Transverse colon (tissue), 4 donors: ENCODE measurements at regions of chr6 and their contacts with region 1.

Region 1: GRCh38 chr6:73520688-73521350 is at the start of gene EEF1A1:
- DNase-seq: peak; percentile 100
- H3K4me3 ChIP-seq: peak within 1 kb of the TSS; percentile 78 to 95 (median 79)
- H3K27ac ChIP-seq: peak within 1 kb of the TSS; percentile 97 to 100 (median 99)
- H3K4me1 ChIP-seq: peaks cover 17 to 56% (median 35%) of the 10 kb centered on the region in 4 donors
- H3K27me3 ChIP-seq: no peaks in the 10 kb centered on the region
- CTCF ChIP-seq: no peak
- EP300 ChIP-seq: peak; percentile 83
- POLR2A ChIP-seq: peak; percentile 100
- total RNA-seq, gene EEF1A1: 2,654 to 8,743 (median 5,443) TPM

Region 2: DNA sequence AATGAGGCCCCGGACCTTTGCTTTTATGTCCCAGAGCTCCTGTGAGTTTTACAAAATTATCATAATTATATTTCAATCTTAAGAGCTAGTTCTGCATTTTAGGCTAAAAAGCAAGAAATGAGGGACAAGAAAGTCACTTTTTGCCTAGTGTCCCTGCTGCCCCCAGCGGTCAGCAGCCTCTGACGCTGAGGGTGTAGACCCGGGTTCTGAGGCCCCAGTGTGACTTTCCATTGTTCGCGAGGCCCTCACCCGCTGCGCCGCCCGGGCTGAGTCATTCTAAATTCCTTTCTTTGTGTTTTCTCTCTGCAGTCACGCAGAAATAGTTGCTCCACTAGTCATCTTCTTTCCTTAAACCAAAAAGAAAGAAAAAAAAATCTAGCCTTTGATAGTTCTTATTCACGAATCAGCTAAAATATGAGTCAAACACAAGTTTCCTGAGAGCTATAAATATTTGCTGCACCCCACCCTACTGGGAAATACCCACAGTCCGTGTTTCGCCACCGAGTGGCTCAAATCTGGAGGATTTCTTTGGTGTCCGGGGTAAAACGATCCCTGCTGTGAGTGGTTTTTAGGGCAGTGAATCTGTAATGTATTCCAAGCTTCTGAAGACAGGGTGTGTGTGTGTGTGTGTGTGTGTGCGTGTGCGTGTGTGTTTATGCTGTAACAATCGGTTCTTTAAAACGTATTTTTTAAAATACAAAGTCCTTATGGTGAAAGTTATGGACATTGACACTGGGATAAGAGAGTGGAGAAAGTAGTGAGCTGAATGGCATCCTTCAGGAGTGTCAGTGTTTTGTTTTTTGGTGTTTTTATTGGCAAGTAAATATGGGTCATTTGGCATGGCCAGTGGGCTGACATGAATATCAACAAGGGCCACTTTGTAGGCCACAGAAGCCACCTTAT is 59.7 kb after region 1 on chr6:
- in situ Hi-C with region 1: loop called in 1 of 4 experiments (anchors 10 kb)
- intact Hi-C with region 1: loop called (anchors 10 kb)
- DNase-seq: peak; percentile 76
- H3K4me3 ChIP-seq: peak overlapping the region in 3 of 4 donors; percentile 10 to 22 (median 13)
- H3K27ac ChIP-seq: peak overlapping the region; percentile 81 to 92 (median 88)
- H3K4me1 ChIP-seq: peaks cover 15 to 30% (median 23%) of the 10 kb centered on the region in 4 donors
- H3K27me3 ChIP-seq: no peaks in the 10 kb centered on the region
- CTCF ChIP-seq: peak in 4 of 5 experiments; percentile 20 to 36 (median 30)
- EP300 ChIP-seq: peak; percentile 64
- POLR2A ChIP-seq: peak; percentile 30

Region 3: GRCh38 chr6:73604020-73604419 is 83.2 kb after region 1 on chr6:
- in situ Hi-C with region 1: loop called in 3 of 4 experiments (anchors 10 to 25 kb)
- intact Hi-C with region 1: no loop called
- DNase-seq: no peak
- H3K4me3 ChIP-seq: no peak overlapping the region
- H3K27ac ChIP-seq: no peak overlapping the region
- H3K4me1 ChIP-seq: peaks cover 0 to 5% (median 0%) of the 10 kb centered on the region in 4 donors
- H3K27me3 ChIP-seq: no peaks in the 10 kb centered on the region
- CTCF ChIP-seq: no peak
- EP300 ChIP-seq: no peak
- POLR2A ChIP-seq: no peak

Region 4: DNA sequence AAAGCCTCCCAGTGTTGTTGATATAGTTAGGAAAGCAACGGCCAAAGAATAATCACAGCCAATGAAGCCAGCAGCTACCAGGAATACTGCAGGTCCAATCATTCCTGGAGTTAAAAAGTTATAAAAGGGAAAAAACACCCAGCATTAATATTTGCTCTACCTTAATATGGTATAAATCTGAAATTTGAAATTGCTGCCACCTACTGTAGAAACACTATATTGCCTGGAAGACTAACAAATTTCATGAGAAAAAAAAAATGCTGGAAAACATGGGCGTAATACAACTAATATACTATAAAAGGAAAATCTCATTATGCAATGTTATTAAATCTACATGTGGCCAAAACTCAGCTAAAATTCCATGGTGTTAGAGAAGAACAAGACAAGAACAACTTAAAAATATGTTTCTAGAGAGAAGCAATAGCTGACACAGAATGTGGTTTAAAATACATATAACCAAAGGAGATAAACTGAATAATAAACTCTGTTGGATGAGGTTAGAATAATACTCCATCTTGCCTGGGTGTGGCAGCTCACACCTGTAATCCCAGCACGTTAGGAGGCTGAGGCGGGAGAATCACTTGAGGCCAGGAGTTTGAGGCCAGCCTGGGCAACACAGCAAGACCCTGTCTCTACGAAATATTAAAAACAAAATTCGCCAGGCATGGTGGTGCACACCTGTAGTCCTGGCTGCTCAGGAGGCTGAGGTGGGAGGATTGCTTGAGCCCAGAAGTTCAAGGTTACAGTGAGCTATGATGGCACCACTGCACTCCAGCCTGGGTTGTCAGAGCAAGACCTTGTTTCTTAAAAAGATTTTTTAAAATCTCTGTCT is 89.8 kb after region 1 on chr6:
- in situ Hi-C with region 1: loop called in 3 of 4 experiments (anchors 10 to 25 kb)
- intact Hi-C with region 1: no loop called
- DNase-seq: no peak
- H3K4me3 ChIP-seq: no peak overlapping the region
- H3K27ac ChIP-seq: no peak overlapping the region
- H3K4me1 ChIP-seq: peaks cover 0 to 6% (median 0%) of the 10 kb centered on the region in 4 donors
- H3K27me3 ChIP-seq: no peaks in the 10 kb centered on the region
- CTCF ChIP-seq: peak; percentile 60 to 79 (median 71)
- EP300 ChIP-seq: no peak
- POLR2A ChIP-seq: no peak